Activated T-helper 1 cell treated with anti-CD3 and anti-CD28 coated beads, Interleukin-12 subunit alpha, Interleukin-12 subunit beta, Interleukin-2, Interleukin-4 antibody, amounts not matched to agents 30 ng/mL and 10 ng/mL and 1 ng/mL, durations not matched to agents 14 hours and 24 hours and 36 hours (primary cell): ENCODE measurements at regions of chr1 and their contacts with region 1.

Region 1: DNA sequence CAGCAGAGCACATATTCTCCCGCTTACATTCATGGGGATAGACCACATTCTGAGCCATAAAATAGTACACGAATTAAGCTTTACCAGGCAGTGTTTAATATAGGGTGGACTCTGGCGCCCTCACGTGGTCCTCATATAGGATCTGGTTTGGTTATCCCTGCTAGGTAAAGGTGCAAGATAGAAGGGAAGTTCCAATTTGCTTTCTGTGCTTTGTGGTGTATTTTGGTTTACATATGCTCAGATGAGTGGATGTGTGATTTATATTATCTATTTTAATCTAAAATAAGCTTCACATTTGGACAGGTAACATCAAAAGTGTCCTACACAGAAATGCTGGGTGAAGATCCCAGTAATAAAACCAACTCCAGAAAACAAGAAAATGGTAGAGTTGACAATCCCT is 3.6 kb downstream of the CR1 start:
- DNase-seq: peak; percentile 46
- H3K4me3 Mint-ChIP-seq: no peak overlapping the region
- H3K27ac Mint-ChIP-seq: no peak overlapping the region
- H3K4me1 Mint-ChIP-seq: peaks cover 12% of the 10 kb centered on the region
- H3K27me3 Mint-ChIP-seq: peaks cover 42% of the 10 kb centered on the region

Region 2: DNA sequence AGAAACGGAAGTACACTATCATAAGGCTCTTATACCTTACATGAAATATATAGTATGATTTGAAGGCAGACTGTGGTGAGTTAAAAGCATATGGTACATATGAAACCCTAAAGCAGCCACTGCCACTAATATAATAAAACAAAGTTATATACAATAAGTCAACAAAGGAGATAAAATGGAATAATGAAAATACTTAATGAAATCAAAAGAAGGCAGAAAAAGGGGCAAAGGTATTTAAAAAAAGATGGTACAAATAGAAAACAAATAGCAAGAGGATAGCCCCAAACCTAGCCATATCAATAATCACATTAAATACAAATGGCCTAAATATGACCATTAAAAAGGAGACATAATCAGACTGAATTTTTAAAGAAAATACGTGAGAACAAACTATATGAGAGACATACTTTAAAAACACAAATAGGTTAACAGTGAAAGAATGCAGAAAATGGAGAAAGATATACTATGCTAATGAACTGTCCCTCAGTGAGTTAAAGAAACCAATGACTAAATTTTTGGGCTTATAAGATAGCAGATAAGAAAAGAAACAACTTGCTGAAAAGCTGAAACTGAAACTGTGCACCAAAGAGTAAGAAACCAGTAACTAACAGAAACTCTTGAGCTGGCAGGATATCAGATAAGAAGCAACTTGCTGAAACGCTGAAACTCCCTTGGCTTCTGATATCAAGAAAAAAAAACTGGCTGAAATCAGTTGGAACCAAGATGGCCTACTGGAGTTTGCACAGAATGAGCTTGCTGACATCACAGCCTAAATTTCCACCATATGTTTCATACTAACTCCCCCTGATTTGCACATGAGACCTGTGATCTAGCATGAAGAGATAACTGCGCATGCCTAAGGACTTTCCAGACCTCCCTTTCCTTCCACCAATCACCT is 682.9 kb before region 1 on chr1:
- intact Hi-C with region 1: loop called (anchors 2 kb)
- DNase-seq: peak; percentile 41
- H3K4me3 Mint-ChIP-seq: peak overlapping the region; percentile 47
- H3K27ac Mint-ChIP-seq: peak overlapping the region; percentile 88
- H3K4me1 Mint-ChIP-seq: peaks cover 43% of the 10 kb centered on the region
- H3K27me3 Mint-ChIP-seq: no peaks in the 10 kb centered on the region

Region 3: DNA sequence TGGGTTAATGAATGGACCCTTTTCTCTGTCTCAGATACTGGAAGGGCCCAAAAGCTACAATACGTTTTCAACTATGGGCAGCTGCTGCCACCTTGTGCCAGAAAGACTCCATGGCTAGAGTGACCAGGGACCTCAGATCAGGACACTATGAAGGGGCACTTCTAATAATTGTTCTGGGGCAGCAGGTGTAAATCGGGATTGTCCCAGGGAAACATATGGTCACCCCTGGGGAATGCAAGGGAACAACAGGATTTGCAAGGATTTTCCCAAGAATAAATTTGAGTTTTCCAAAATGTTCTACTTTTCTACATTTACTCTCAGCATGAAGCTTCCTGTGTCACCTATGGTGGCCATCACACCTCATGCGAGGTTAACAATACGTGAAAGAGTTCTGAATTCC is 517.4 kb before region 1 on chr1:
- intact Hi-C with region 1: loop called (anchors 5 kb)
- DNase-seq: peak; percentile 36
- H3K4me3 Mint-ChIP-seq: no peak overlapping the region
- H3K27ac Mint-ChIP-seq: no peak overlapping the region
- H3K4me1 Mint-ChIP-seq: no peaks in the 10 kb centered on the region
- H3K27me3 Mint-ChIP-seq: peaks cover 34% of the 10 kb centered on the region

Region 4: DNA sequence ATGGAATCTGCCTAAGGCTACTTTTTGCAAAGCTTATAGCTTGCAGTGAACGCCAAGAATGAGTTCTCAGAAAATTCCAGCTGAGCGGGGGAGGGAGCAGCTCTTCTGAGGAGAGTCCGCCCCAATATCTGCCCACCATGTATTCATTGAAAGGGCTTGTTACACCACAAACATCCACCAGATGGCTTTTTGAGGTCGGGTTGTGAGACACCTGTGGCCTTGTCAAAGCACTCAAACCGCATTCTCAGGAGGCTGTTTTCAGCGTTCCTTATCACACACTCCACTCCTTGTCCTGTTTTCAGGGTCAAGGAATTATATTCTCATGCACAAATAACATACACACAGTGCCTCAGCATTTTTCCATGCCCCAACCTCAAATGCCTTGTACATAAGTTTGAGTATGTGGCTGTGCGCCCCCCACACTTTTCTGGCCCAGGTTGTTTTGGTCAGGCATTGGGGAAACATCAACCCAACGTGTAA is 414.8 kb before region 1 on chr1:
- intact Hi-C with region 1: loop called (anchors 1 kb)
- DNase-seq: peak; percentile 50
- H3K4me3 Mint-ChIP-seq: no peak overlapping the region
- H3K27ac Mint-ChIP-seq: peak overlapping the region; percentile 5
- H3K4me1 Mint-ChIP-seq: peaks cover 39% of the 10 kb centered on the region
- H3K27me3 Mint-ChIP-seq: peaks cover 12% of the 10 kb centered on the region

Region 5: DNA sequence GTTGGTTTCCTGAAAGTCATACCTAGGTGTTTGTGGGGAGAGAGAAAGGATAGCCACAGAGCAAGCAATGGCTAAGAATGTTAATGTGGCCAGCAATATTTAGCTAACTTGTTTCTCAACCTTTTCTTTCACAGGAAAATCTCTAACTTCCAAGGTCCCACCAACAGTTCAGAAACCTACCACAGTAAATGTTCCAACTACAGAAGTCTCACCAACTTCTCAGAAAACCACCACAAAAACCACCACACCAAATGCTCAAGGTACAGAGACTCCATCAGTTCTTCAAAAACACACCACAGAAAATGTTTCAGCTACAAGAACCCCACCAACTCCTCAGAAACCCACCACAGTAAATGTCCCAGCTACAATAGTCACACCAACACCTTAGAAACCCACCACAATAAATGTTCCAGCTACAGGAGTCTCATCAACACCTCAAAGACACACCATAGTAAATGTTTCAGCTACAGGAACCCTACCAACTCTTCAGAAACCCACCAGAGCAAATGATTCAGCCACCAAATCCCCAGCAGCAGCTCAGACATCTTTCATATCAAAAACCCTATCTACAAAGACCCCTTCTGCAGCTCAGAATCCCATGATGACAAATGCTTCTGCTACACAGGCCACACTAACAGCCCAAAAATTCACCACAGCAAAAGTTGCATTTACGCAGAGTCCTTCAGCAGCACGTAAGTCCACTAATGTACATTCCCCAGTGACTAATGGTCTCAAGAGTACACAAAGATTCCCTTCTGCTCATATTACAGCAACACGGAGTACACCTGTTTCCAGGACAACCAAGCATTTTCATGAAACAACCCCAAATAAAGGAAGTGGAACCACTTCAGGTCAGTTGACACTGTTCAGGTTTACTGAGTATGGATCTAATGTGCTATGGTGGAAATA is 162.8 kb before region 1 on chr1:
- intact Hi-C with region 1: loop called (anchors 1 kb)
- DNase-seq: peak; percentile 65
- H3K4me3 Mint-ChIP-seq: peak overlapping the region; percentile 44
- H3K27ac Mint-ChIP-seq: peak overlapping the region; percentile 89
- H3K4me1 Mint-ChIP-seq: peaks cover 73% of the 10 kb centered on the region
- H3K27me3 Mint-ChIP-seq: peaks cover 2% of the 10 kb centered on the region

Region 6: DNA sequence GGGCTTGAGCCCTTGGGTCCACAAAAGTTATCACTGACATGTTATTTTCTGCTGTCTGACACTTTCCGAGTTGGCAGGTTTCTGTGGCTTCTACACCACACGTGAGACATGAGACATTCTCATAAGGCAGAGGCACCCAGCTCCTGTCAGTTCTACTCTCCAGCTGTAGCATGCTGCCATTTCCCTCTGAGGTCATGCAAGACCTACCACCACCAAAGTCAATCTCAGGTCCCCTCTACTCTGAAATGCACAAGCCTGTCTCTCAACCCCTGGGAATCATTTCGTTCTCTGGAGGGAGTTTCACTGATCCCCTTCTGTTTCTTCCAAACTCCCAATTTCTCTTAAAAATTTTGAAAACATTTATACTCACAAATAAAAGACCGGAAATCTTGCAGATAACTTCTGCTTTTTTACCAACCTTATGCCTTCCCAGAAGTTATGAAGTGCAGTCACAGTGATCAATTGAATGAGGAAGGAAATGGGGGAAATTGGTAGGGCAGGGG is 84.9 kb before region 1 on chr1:
- intact Hi-C with region 1: loop called (anchors 1 kb)
- DNase-seq: no peak
- H3K4me3 Mint-ChIP-seq: no peak overlapping the region
- H3K27ac Mint-ChIP-seq: peak overlapping the region; percentile 35
- H3K4me1 Mint-ChIP-seq: peaks cover 33% of the 10 kb centered on the region
- H3K27me3 Mint-ChIP-seq: peaks cover 4% of the 10 kb centered on the region

Region 7: GRCh38 chr1:207519505-207520404 is 20.2 kb after region 1 on chr1:
- intact Hi-C with region 1: no loop called
- DNase-seq: no peak
- H3K4me3 Mint-ChIP-seq: no peak overlapping the region
- H3K27ac Mint-ChIP-seq: no peak overlapping the region
- H3K4me1 Mint-ChIP-seq: no peaks in the 10 kb centered on the region
- H3K27me3 Mint-ChIP-seq: peaks cover 20% of the 10 kb centered on the region